SK-N-SH (cell line): ENCODE measurements at regions of chr9 and their contacts with region 1.

Region 1: DNA sequence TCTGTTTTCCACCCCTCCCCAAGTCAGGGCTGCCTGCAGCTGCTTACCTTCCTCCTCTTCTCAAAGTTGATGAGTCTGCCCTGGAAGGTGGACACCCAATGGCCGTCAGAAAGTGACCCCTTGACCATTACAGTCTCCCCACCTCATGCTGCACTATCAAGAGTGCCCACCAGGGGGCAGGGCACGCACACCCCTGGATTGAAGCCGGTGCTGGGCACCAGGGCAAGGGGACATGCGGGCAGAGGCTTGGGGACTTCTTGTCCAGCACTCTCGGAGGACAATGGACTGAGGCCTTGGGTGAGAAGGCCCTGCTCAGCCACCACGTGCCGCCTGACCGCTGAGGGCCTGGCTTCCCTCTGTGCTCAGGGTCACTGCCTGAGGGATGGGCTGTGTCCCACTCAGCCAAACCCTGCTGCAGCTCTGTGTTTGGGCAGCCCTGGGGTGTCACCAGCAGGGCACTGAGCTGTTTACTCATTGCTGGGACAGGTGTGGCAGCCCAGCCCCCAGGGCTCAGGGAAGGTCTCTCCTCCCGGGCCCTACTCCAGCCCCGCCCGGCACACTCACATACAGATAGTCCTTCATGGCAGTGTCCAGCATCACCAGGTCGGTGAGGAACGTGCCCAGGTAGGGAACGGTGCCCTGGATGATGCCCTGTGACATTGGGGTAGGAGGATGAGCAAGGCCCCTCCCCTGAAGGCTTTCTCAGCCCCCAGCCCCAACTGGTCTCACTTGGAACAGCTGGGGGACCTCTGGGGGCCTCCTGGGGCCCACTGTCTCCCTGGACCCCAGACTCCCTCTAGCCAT is 17.7 kb downstream of the RALGDS start:
- DNase-seq: peak; percentile 93
- H3K4me3 ChIP-seq: no peak overlapping the region; a peak in 1 of 4 replicates
- H3K27ac ChIP-seq: peak overlapping the region in 1 of 2 experiments; percentile 50; a peak in 1 of 4 replicates
- H3K4me1 ChIP-seq: peaks cover 0 to 2% of the 10 kb centered on the region in 2 experiments; a peak in 1 of 4 replicates
- H3K27me3 ChIP-seq: no peaks in the 10 kb centered on the region
- CTCF ChIP-seq: peak; percentile 94
- EP300 ChIP-seq: no peak
- RAD21 ChIP-seq: peak; percentile 92

Region 2: DNA sequence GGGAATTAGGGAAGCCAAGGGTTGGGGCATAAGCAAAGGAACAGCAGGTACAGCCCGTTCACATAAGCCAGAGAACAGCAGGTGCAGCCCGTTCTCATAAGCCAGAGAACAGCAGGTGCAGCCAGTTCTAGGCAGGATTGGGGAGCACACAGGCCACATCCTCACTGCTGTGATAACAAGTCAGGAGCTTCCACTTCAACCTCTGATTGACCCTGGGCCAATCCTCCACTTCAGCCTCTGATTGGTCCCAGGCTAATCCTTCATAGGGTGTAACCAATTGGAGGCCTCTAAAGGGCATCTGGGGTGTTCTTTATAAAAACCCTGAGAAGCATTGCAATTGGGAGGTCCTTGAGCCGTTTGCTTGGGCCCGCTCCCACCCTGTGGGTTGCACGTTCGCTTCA is 14.1 kb before region 1 on chr9:
- CTCF ChIA-PET with region 1: interaction called, 17 read pairs
- POLR2A ChIA-PET with region 1: interaction called, 4 read pairs
- DNase-seq: no peak
- H3K4me3 ChIP-seq: no peak overlapping the region
- H3K27ac ChIP-seq: peak overlapping the region in 1 of 2 experiments; percentile 14; a peak in 1 of 4 replicates
- H3K4me1 ChIP-seq: peaks cover 0 to 36% of the 10 kb centered on the region in 2 experiments; a peak in 2 of 4 replicates
- H3K27me3 ChIP-seq: no peaks in the 10 kb centered on the region
- CTCF ChIP-seq: no peak
- EP300 ChIP-seq: no peak
- RAD21 ChIP-seq: no peak

Region 3: DNA sequence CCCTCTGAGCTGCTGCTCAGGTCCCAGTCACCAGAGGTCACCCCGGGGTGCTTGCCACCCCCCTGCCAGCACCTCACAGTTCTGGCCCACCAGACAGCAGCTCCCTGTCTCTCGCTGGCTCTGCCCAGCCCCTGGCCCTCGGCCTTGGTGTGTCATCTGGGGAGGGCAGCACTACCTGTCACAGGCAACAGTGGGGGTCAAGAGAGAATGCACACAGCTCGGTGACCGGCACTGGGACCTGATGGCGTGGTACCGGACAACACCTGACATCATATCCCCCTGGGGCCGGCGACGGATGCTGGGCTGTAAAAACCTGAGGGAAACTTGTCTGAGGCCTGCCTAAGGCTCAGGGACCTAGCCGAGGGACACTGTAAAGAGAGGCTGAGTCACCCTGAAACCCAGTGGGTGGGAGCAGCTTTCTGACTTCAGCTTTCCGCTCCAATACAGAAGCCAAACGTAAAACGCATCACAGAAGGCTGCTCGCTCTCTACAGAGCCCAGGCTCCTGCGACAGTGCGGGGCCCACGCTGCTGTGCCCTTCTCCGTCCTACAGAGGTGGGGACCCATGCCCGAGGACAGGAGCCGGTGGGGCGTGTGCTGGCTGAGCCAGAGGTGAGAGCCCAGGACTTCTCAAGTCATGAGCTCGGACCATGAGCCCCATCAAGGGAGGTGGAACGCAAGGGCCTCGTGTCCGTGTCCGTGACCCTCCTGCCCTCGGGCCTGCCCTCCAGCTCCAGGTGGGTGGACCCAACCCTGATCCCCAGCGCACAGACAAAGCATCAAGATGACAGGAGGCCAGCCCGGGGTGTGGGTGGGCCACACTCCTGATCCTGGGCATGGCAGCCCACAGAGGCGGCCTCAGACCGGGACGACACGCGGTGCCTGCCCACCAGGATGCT is 12.3 kb after region 1 on chr9:
- CTCF ChIA-PET with region 1: interaction called, 84 read pairs
- POLR2A ChIA-PET with region 1: interaction called, 9 read pairs
- DNase-seq: no peak
- H3K4me3 ChIP-seq: no peak overlapping the region
- H3K27ac ChIP-seq: peak overlapping the region in 1 of 2 experiments; percentile 99; a peak in 2 of 4 replicates
- H3K4me1 ChIP-seq: peaks cover 22 to 84% of the 10 kb centered on the region in 2 experiments
- H3K27me3 ChIP-seq: no peaks in the 10 kb centered on the region
- CTCF ChIP-seq: no peak
- EP300 ChIP-seq: no peak
- RAD21 ChIP-seq: no peak